ENCODE measurements at regions of chr3 and their contacts with region 1.

Region 1: DNA sequence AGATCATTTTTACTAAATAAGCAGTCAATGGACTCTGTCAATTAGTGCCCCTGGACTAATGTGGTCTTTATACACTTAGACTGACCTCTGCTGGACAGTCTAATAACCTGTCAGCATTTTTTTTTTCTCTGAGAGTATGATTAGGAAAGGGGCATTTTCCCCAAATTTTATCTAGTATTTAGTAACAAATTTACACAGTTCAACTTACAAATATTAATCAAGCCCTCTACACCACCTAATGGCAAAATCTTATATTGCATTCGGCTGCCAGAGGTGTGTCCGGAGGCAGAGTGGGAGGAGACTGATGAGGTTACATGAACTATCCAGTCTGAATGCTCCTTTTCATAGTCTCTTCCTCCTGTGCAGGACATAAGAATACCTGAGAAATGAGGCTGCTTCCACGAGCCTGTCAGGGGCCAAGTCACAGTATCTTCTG is 36.0 kb upstream of the COLQ start:
- DNase-seq: peak; percentile 66
- H3K4me3 ChIP-seq: no peak overlapping the region
- H3K27ac ChIP-seq: peak overlapping the region in 1 of 4 donors; percentile 28
- H3K4me1 ChIP-seq: peaks cover 0 to 18% (median 2%) of the 10 kb centered on the region in 4 donors
- H3K27me3 ChIP-seq: no peaks in the 10 kb centered on the region
- CTCF ChIP-seq: peak; percentile 51 to 68 (median 64)
- EP300 ChIP-seq: no peak
- POLR2A ChIP-seq: no peak

Region 2: GRCh38 chr3:15108082-15108545 is 449.4 kb before region 1 on chr3:
- in situ Hi-C with region 1: loop called in 1 of 4 experiments (anchors 25 kb)
- intact Hi-C with region 1: no loop called
- DNase-seq: peak; percentile 78
- H3K4me3 ChIP-seq: no peak overlapping the region
- H3K27ac ChIP-seq: no peak overlapping the region
- H3K4me1 ChIP-seq: peaks cover 1 to 8% (median 2%) of the 10 kb centered on the region in 4 donors
- H3K27me3 ChIP-seq: no peaks in the 10 kb centered on the region
- CTCF ChIP-seq: peak; percentile 78 to 93 (median 89)
- EP300 ChIP-seq: no peak
- POLR2A ChIP-seq: no peak

Region 3: GRCh38 chr3:15427182-15427880 is 130.2 kb before region 1 on chr3 and contains the starts of genes EAF1 and METTL6:
- in situ Hi-C with region 1: loop called in 3 of 4 experiments (anchors 25 kb)
- intact Hi-C with region 1: loop called (anchors 10 kb)
- DNase-seq: peak; percentile 88
- H3K4me3 ChIP-seq: peak within 1 kb of the TSS; percentile 72 to 88 (median 77)
- H3K27ac ChIP-seq: peak within 1 kb of the TSS; percentile 77 to 89 (median 85)
- H3K4me1 ChIP-seq: peaks cover 6 to 41% (median 23%) of the 10 kb centered on the region in 4 donors
- H3K27me3 ChIP-seq: no peaks in the 10 kb centered on the region
- CTCF ChIP-seq: peak in 4 of 5 experiments; percentile 22 to 34 (median 23)
- EP300 ChIP-seq: no peak
- POLR2A ChIP-seq: peak; percentile 43
- total RNA-seq, gene EAF1: 19.1 to 37.0 (median 26.4) TPM
- total RNA-seq, gene METTL6: 2.6 to 9.6 (median 9.0) TPM

Region 4: GRCh38 chr3:15439476-15439875 is 118.1 kb before region 1 on chr3:
- in situ Hi-C with region 1: loop called in 3 of 4 experiments (anchors 25 kb)
- intact Hi-C with region 1: loop called (anchors 10 kb)
- DNase-seq: no peak
- H3K4me3 ChIP-seq: no peak overlapping the region
- H3K27ac ChIP-seq: no peak overlapping the region
- H3K4me1 ChIP-seq: no peaks in the 10 kb centered on the region
- H3K27me3 ChIP-seq: no peaks in the 10 kb centered on the region
- CTCF ChIP-seq: no peak
- EP300 ChIP-seq: no peak
- POLR2A ChIP-seq: no peak

Measured in transverse colon (tissue), 4 donors.